OCI-LY7 (cell line): ENCODE measurements at regions of chr2 and their contacts with region 1.

Region 1: GRCh38 chr2:134988994-134989605 is 58.1 kb downstream of the MAP3K19 start:
- DNase-seq: peak; percentile 48
- H3K4me3 ChIP-seq: no peak overlapping the region
- H3K27ac ChIP-seq: no peak overlapping the region
- H3K4me1 ChIP-seq: no peaks in the 10 kb centered on the region
- CTCF ChIP-seq: peak; percentile 86

Region 2: GRCh38 chr2:134952608-134953007 is 36.5 kb before region 1 on chr2:
- CTCF ChIA-PET with region 1: no interaction called
- POLR2A ChIA-PET with region 1: no interaction called
- intact Hi-C with region 1: no loop called
- DNase-seq: no peak
- H3K4me3 ChIP-seq: no peak overlapping the region
- H3K27ac ChIP-seq: no peak overlapping the region
- H3K4me1 ChIP-seq: no peaks in the 10 kb centered on the region
- CTCF ChIP-seq: no peak

Region 3: DNA sequence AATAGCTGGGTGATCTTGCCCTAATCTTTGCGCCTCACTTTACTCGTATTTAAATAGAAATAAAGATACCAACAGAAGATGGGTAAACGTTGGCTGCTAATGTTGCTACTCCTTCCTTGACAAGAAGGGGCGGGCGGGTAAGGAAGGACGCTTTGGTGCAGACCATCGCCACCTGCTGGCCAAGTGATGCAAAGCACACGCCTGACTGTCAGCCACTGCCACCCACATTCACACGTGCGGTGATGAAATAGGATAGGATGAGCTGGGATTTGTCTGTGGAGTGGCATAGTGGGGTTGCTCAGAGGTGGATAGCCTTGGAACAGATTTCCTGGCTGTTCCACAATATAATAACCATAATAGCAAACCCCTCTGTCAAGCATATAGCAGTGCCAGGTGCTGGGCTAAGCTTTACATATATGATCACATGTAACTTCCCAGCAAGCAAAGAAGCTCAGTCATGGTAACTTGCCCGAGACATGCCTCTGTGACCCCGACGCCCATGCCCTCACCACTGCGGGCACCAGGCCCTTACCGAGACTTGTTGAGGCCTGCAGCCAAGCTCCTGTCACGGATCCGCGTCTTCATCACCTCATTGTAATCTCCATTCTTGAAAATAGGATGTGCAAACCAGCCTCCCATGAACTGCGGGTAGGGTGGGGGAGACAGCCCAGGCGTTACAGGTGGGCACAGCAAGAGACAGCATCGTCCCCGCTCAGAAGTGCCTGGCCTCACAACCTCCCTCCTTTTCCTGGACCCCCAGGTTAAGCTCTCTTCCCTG is 808.6 kb after region 1 on chr2:
- CTCF ChIA-PET with region 1: interaction called, 4 read pairs
- POLR2A ChIA-PET with region 1: no interaction called
- intact Hi-C with region 1: loop called (anchors 5 kb)
- DNase-seq: peak; percentile 83
- H3K4me3 ChIP-seq: no peak overlapping the region
- H3K27ac ChIP-seq: no peak overlapping the region
- H3K4me1 ChIP-seq: peaks cover 9% of the 10 kb centered on the region
- CTCF ChIP-seq: peak; percentile 95